ENCODE measurements at regions of chr17 and their contacts with region 1.

Region 1: DNA sequence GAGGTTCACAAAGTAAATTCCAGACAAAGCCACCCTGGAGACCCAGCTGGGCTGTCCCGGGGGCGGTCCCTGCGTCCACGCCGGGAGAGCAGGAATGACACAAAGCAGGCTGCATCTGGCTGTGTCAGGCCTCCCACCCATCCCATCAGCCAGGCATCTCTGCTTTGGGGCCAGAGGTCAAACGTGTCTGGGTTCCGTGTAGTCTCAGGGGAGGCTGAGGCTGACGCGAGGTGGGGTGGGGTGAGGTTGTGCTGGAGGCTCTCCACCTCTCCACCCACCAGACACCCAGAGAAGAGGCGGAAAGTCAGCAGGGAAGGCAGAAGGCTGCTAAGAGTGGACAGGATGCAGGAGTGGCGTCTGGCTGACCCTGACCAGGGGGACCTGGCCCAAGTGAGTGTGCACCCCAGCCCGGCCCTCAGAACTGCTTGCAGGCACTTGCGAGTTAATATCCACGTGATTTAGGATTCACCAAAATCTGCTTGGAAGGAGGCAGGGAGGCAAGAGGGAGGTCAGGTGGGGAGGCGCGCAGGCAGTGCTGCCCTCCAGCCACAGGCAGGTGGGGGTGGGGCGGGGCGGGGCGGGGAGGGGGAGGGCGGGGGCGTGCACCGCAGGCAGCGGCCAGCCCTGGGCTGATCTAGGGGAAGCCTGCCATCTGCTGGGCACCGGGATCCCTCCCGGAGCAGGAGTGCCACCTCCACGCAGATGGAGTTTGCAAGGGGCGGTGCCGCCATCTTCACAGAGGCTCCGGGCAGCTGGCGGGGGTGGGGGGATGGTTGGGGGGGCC is 44.3 kb downstream of the TBC1D16 start:
- DNase-seq: peak; percentile 100
- H3K4me3 ChIP-seq: no peak overlapping the region
- H3K27ac ChIP-seq: no peak overlapping the region; a peak in 1 of 4 replicates
- H3K4me1 ChIP-seq: peaks cover 21 to 40% of the 10 kb centered on the region in 2 experiments; a peak in 3 of 4 replicates
- H3K27me3 ChIP-seq: no peaks in the 10 kb centered on the region
- CTCF ChIP-seq: peak; percentile 46
- EP300 ChIP-seq: no peak
- RAD21 ChIP-seq: peak; percentile 78

Region 2: DNA sequence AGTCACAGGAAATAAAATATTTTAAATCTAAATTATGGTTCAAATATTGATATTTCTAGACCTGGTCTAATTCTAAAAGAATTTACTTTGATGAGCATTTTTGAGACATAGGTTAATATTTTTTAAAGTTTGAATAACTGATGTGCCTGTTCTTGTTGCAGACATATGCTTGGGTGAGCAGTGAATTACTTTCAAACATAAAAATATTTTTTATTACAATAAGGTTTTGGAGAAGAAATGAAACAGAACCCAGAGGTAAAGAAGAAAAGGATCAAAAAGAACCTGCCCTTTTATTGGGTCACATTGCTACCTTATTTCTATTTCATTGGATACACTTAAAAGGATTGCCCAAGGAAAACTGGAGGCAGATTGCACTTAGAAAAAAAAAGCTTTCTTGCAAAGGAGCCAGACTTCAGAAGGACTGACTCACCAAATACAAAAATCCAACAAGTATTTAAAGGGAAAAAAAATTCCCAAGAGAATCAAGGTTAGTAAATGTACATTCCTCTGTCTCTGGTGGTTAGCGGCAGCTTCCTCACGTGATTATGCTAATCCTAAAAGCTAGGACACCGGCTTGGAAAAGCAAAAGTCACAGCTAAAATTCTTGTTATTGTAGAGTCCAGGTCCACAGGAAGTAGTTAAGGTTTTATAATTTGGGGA is 242.0 kb before region 1 on chr17:
- CTCF ChIA-PET with region 1: interaction called, 36 read pairs
- POLR2A ChIA-PET with region 1: interaction called, 6 read pairs
- DNase-seq: no peak
- H3K4me3 ChIP-seq: no peak overlapping the region
- H3K27ac ChIP-seq: no peak overlapping the region
- H3K4me1 ChIP-seq: peaks cover 0 to 6% of the 10 kb centered on the region in 2 experiments; a peak in 1 of 4 replicates
- H3K27me3 ChIP-seq: peaks cover 22% of the 10 kb centered on the region
- CTCF ChIP-seq: no peak
- EP300 ChIP-seq: no peak
- RAD21 ChIP-seq: no peak

Region 3: GRCh38 chr17:79915850-79916430 is 75.4 kb before region 1 on chr17:
- CTCF ChIA-PET with region 1: interaction called, 10 read pairs
- POLR2A ChIA-PET with region 1: no interaction called
- DNase-seq: no peak
- H3K4me3 ChIP-seq: no peak overlapping the region
- H3K27ac ChIP-seq: no peak overlapping the region
- H3K4me1 ChIP-seq: peaks cover 9 to 27% of the 10 kb centered on the region in 2 experiments; a peak in 2 of 4 replicates
- H3K27me3 ChIP-seq: no peaks in the 10 kb centered on the region
- CTCF ChIP-seq: peak; percentile 35
- EP300 ChIP-seq: no peak
- RAD21 ChIP-seq: peak; percentile 58

Region 4: DNA sequence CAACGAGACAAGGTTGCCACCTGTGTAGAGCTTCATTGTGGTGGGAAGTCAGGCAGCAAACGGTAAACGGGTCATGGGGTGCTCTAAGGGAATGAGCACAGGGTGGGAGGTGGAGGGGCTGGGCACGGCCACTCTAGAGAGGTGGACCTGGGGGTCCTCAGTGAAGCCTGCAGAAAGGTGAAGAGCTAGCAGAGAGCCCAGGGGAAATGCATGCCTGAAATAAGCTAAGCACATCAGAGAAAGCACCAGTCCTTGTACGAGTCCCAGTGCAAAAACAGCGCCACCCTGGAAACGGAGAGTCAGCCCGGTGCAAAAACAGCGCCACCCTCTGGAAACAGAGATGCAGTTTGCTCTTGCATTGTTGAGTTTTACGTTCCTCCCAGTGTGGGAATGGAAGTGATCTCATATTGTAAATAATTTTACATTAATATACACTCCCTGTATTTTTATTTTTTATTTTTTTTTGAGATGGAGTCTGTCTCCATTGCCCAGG is 20.7 kb before region 1 on chr17:
- CTCF ChIA-PET with region 1: interaction called, 24 read pairs
- POLR2A ChIA-PET with region 1: no interaction called
- DNase-seq: peak; percentile 33
- H3K4me3 ChIP-seq: no peak overlapping the region
- H3K27ac ChIP-seq: no peak overlapping the region
- H3K4me1 ChIP-seq: no peaks in the 10 kb centered on the region; a peak in 1 of 4 replicates
- H3K27me3 ChIP-seq: no peaks in the 10 kb centered on the region
- CTCF ChIP-seq: 0 out of 2 replicates have a peak, but pooled peaks have one; percentile 48
- EP300 ChIP-seq: no peak
- RAD21 ChIP-seq: peak; percentile 60

Region 5: DNA sequence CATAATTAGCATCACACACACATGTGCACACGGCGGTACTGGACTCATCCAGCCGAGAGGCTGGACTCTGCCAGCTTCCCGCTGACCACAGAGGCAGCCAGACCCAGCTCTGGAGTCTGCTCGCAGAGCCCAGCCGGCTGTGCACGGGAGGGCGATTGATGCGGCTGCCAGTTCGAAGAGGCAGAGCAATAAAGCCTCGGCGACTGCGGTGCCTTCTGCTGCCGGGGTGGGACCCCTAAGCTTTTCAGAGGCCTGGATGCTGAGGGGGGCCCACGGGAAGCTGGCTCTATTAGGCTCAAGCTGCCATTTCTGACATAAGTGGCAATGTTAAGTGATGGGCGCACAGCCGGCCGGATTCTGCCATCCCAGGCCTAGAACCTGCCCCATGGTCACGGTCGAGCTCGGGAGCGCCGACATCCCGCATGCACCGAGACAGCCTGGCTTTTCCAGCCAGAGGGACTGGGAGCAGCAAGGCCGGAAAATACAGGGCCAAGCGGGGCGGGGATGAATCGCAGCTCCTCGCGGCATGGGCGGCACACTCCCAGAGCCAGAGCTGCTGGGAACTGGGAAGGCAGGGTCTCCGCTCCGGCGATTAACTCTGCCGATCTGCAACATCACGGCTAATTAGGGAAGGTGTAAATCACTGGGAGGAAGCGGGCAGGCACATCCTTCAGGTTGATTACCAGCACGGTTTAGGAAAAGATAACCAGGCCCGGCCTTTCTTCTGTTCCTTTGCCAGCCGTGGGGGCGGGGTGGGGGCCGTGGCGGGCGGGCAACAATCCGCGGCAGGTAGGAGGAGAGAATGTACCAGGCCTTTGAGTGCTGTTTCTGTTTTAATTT is 13.4 kb before region 1 on chr17:
- CTCF ChIA-PET with region 1: interaction called, 24 read pairs
- POLR2A ChIA-PET with region 1: no interaction called
- DNase-seq: peak; percentile 26
- H3K4me3 ChIP-seq: no peak overlapping the region
- H3K27ac ChIP-seq: no peak overlapping the region
- H3K4me1 ChIP-seq: peaks cover 0 to 20% of the 10 kb centered on the region in 2 experiments; a peak in 1 of 4 replicates
- H3K27me3 ChIP-seq: no peaks in the 10 kb centered on the region
- CTCF ChIP-seq: no peak
- EP300 ChIP-seq: no peak
- RAD21 ChIP-seq: no peak

Region 6: DNA sequence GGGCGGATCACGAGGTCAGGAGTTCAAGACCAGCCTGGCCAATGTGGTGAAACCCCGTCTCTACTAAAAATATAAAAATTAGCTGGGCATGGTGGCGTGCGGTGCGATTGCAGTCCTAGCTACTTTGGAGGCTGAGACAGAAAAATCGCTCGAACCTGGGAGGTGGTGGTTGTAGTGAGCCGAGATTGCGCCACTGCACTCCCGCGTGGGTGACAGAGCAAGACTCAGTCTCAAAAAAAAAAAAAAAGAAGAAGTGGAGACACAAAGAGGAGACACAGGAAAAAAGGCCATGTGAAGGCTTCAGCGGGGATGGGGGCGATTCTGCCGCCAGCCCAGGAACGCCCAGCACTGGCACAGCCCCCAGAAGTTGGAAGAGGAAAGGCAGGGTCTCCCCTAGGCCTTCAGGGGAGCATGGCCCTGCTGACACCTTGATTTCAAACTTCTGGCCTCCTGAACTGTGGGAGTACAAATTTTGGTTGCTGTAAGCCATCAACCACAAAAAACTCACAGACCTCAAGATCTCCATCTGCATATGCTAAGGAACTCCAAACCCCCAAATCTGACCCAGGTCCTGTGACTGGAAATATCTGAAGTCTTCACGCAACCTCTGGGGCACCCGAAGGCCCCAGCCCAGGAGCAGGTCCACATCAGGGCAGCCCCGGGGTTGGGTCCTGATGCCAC is 221.8 kb after region 1 on chr17:
- CTCF ChIA-PET with region 1: no interaction called
- POLR2A ChIA-PET with region 1: no interaction called
- DNase-seq: no peak
- H3K4me3 ChIP-seq: no peak overlapping the region
- H3K27ac ChIP-seq: no peak overlapping the region
- H3K4me1 ChIP-seq: peaks cover 0 to 2% of the 10 kb centered on the region in 2 experiments; a peak in 1 of 4 replicates
- H3K27me3 ChIP-seq: no peaks in the 10 kb centered on the region
- CTCF ChIP-seq: no peak
- EP300 ChIP-seq: no peak
- RAD21 ChIP-seq: no peak